Heart right ventricle (tissue), 16 donors: ENCODE measurements at regions of chr7 and their contacts with region 1.

Region 1: DNA sequence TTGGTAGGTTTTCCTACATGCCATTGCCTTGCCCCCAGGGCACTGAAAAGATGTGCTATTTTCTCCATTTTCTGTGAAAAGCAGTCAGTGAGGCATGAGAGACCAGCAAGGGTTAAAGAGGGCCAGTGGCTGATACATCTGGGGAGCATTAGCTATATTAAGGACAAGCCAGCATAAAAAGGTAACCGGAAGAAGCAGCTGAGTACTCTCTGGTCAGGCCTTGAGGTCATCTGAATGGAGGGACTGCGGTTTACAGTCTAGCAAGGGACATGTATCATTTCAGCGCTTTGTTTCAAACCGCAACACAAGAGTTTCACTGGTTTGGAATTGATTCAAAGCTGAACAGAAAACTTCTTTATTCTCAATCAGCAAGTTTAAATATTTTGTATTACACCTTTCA is 120.4 kb downstream of the EPDR1 start:
- DNase-seq: no peak
- ATAC-seq: no peak
- H3K4me3 ChIP-seq: no peak overlapping the region
- H3K27ac ChIP-seq: no peak overlapping the region
- H3K4me1 ChIP-seq: no peaks in the 10 kb centered on the region
- H3K27me3 ChIP-seq: no peaks in the 10 kb centered on the region
- CTCF ChIP-seq: no peak

Region 2: DNA sequence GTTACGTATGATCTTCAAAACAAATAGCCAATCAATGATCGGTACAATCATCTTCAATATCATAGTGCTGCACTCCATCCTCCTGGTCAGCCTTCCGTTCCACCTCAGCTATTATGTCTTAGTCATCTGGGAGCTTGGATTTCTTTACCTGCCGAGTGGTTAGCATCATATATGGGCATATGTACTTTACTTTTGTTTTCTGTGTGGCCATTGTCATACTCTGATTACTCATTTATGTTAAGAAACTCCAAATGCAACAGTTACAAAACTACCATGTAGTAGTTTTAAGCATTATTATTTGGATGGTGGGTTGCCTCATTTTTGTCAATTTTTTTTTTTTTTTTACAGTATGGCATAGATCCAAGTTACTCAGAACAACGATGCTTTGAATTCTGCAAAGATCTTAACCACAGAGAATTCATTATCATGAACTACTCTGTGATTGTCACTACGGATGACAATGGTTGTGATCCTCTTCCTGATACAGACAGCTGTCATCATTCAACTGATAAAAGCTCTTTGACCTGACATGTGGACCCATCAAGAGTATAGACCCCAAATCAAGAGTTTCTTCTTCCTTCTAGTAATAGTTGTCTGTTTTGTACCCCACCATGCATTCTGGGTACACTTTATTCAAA is 244.6 kb before region 1 on chr7:
- intact Hi-C with region 1: no loop called
- DNase-seq: no peak
- ATAC-seq: no peak
- H3K4me3 ChIP-seq: no peak overlapping the region
- H3K27ac ChIP-seq: no peak overlapping the region
- H3K4me1 ChIP-seq: no peaks in the 10 kb centered on the region
- H3K27me3 ChIP-seq: no peaks in the 10 kb centered on the region
- CTCF ChIP-seq: no peak

Region 3: GRCh38 chr7:37916673-37917660 is 123.9 kb before region 1 on chr7 and contains the start of gene SFRP4:
- intact Hi-C with region 1: no loop called
- DNase-seq: peak; percentile 61 to 67
- ATAC-seq: peak; percentile 57 to 83 (median 62)
- H3K4me3 ChIP-seq: peak within 1 kb of the TSS; percentile 31 to 62 (median 55)
- H3K27ac ChIP-seq: peak within 1 kb of the TSS; percentile 12 to 82 (median 69)
- H3K4me1 ChIP-seq: peaks cover 4 to 50% (median 32%) of the 10 kb centered on the region in 9 donors
- H3K27me3 ChIP-seq: peaks cover 0 to 69% (median 17%) of the 10 kb centered on the region in 7 donors
- CTCF ChIP-seq: peak; percentile 35 to 73 (median 68)
- total RNA-seq, gene SFRP4: 0.23 to 9.9 (median 3.4) TPM

Region 4: GRCh38 chr7:38052786-38053185 is 12.0 kb after region 1 on chr7:
- intact Hi-C with region 1: loop called in 1 of 10 experiments (anchors 1 kb)
- DNase-seq: no peak
- ATAC-seq: no peak
- H3K4me3 ChIP-seq: no peak overlapping the region
- H3K27ac ChIP-seq: no peak overlapping the region
- H3K4me1 ChIP-seq: no peaks in the 10 kb centered on the region
- H3K27me3 ChIP-seq: peaks cover 0 to 4% (median 0%) of the 10 kb centered on the region in 7 donors
- CTCF ChIP-seq: no peak

Region 5: DNA sequence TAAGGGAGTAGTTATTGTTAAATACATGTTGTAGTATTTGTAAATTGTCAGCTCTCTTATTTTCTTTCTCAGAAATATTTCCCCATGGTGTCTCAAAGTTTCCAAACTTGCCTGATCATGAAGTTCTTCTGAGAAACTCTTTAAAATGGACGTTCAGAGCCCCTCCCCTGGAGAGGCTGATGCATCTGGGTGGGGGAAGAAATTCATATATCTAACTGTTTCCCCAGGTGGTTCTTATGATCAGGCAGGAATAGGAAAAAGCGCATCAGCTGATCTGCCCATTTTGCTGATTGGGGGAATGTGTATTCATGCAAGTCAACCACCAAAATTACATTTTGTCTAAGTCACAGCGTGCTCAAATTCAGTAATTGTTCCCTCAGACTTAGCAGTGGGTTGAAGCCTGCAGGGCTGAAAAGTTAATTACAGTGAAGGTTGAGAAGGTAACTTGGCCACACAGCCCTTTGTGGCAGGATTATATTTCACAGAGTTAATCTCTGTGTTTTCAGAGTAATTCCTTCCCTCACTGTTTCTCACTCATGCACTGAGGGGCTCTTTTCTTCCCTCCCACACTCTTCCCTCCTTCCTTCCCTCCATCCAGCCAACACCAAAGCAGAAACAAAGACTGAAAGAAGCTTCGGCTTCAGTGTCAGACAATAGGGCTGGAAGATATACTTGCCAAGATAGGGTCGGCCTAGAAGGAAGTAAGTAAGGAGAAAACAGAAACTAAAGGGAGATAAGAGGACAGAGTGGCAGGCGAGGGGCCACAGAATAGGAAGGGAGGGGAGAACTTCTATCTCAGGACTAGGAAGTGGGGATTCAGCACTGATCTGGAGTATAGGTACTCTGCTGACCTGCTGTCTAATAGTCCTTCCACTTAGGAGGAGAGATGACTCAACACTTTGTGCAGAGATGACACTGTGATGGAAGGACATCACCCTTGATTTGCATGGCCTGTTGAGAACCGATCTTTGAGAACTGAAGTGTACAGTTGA is 86.7 kb after region 1 on chr7:
- intact Hi-C with region 1: no loop called
- DNase-seq: no peak
- ATAC-seq: no peak
- H3K4me3 ChIP-seq: no peak overlapping the region
- H3K27ac ChIP-seq: no peak overlapping the region
- H3K4me1 ChIP-seq: no peaks in the 10 kb centered on the region
- H3K27me3 ChIP-seq: peaks cover 0 to 3% (median 0%) of the 10 kb centered on the region in 7 donors
- CTCF ChIP-seq: no peak